Activated B cell treated with CpG ODN at 0.5 μM for 24 hours (primary cell): ENCODE measurements at regions of chr17 and their contacts with region 1.

Region 1: GRCh38 chr17:64216338-64217248 is 46.5 kb downstream of the TEX2 start:
- DNase-seq: peak; percentile 17
- ATAC-seq: peak; percentile 63
- H3K4me3 Mint-ChIP-seq: peak overlapping the region; percentile 32
- H3K27ac Mint-ChIP-seq: peak overlapping the region; percentile 76
- H3K4me1 Mint-ChIP-seq: peaks cover 31% of the 10 kb centered on the region
- H3K27me3 Mint-ChIP-seq: no peaks in the 10 kb centered on the region
- CTCF ChIP-seq: no peak

Region 2: GRCh38 chr17:64091116-64091515 is 125.5 kb before region 1 on chr17:
- CTCF ChIA-PET with region 1: no interaction called
- POLR2A ChIA-PET with region 1: no interaction called
- intact Hi-C with region 1: no loop called
- DNase-seq: no peak
- ATAC-seq: no peak
- H3K4me3 Mint-ChIP-seq: no peak overlapping the region
- H3K27ac Mint-ChIP-seq: peak overlapping the region; percentile 5
- H3K4me1 Mint-ChIP-seq: peaks cover 11% of the 10 kb centered on the region
- H3K27me3 Mint-ChIP-seq: no peaks in the 10 kb centered on the region
- CTCF ChIP-seq: no peak

Region 3: GRCh38 chr17:64155751-64156544 is 60.6 kb before region 1 on chr17:
- CTCF ChIA-PET with region 1: no interaction called
- POLR2A ChIA-PET with region 1: no interaction called
- intact Hi-C with region 1: no loop called
- DNase-seq: no peak
- ATAC-seq: no peak
- H3K4me3 Mint-ChIP-seq: no peak overlapping the region
- H3K27ac Mint-ChIP-seq: no peak overlapping the region
- H3K4me1 Mint-ChIP-seq: no peaks in the 10 kb centered on the region
- H3K27me3 Mint-ChIP-seq: no peaks in the 10 kb centered on the region
- CTCF ChIP-seq: no peak

Region 4: GRCh38 chr17:64262417-64263260 is 46.0 kb after region 1 on chr17 and contains the start of gene TEX2:
- CTCF ChIA-PET with region 1: no interaction called
- POLR2A ChIA-PET with region 1: interaction called, 11 read pairs
- intact Hi-C with region 1: loop called (anchors 1 kb)
- DNase-seq: peak; percentile 43
- ATAC-seq: peak; percentile 25
- H3K4me3 Mint-ChIP-seq: peak within 1 kb of the TSS; percentile 88
- H3K27ac Mint-ChIP-seq: peak within 1 kb of the TSS; percentile 80
- H3K4me1 Mint-ChIP-seq: peaks cover 19% of the 10 kb centered on the region
- H3K27me3 Mint-ChIP-seq: peaks cover 10% of the 10 kb centered on the region
- CTCF ChIP-seq: no peak
- total RNA-seq, gene TEX2: 8.1 TPM in 2 replicates

Region 5: DNA sequence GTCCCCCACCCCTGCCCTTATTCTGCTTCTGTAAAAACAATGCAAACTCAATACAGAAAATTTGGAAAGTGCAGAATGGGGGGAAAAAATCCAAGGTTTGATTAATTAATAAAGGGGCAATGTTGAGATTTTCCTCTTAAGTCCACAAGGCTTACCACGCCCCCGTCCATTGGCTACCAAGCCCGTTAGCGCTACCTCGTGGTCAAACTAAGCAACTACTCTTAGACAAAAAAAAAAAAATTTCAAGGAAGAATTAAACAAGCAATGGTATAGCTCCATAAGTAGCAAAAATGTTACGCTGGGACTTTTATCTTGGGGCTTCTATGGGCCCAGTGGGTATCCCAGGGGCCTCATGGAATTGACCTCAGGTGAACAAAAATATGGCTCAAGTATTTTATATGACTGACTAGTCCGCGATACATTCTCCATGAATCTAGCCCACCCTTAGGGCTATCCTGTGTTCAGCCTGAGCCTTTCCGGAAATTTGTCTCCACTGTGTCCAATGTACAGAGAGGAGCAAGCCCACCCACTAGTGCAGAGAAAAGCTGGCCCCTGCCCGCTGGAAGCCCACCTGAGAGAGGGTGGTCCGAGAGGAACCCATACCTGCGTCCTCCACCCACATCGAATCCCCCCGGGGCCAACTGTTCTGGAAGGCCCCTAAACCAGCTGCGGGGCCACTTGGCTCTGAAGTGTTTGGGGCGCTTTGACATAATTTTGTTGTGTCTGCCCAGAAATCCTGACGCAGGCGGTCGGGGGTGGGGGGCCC is 65.6 kb after region 1 on chr17:
- CTCF ChIA-PET with region 1: interaction called, 3 read pairs
- POLR2A ChIA-PET with region 1: no interaction called
- intact Hi-C with region 1: loop called (anchors 2 kb)
- DNase-seq: no peak
- ATAC-seq: peak; percentile 58
- H3K4me3 Mint-ChIP-seq: no peak overlapping the region
- H3K27ac Mint-ChIP-seq: no peak overlapping the region
- H3K4me1 Mint-ChIP-seq: no peaks in the 10 kb centered on the region
- H3K27me3 Mint-ChIP-seq: no peaks in the 10 kb centered on the region
- CTCF ChIP-seq: no peak

Region 6: DNA sequence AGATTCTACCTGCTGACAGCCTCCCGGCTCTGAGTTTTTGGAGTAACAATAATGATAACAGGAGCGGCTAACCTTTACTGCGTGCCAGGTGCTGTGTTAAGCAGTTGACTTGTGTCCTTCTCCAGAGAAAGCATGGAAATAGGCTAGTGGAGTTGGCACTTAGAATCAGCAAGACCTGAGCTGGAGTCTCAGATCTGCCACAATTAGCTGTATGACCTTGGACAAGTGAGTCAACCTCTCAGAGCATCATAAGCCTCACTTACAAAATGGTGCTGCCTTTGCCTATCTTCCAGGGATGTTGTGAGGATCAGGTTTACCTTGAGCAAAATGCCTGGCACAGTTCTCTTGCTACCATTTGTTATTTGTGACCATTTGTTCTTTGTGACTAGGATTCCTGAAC is 78.6 kb after region 1 on chr17:
- CTCF ChIA-PET with region 1: no interaction called
- POLR2A ChIA-PET with region 1: no interaction called
- intact Hi-C with region 1: no loop called
- DNase-seq: no peak
- ATAC-seq: no peak
- H3K4me3 Mint-ChIP-seq: no peak overlapping the region
- H3K27ac Mint-ChIP-seq: no peak overlapping the region
- H3K4me1 Mint-ChIP-seq: peaks cover 2% of the 10 kb centered on the region
- H3K27me3 Mint-ChIP-seq: peaks cover 3% of the 10 kb centered on the region
- CTCF ChIP-seq: no peak